ENCODE measurements at regions of chr6 and their contacts with region 1.

Region 1: DNA sequence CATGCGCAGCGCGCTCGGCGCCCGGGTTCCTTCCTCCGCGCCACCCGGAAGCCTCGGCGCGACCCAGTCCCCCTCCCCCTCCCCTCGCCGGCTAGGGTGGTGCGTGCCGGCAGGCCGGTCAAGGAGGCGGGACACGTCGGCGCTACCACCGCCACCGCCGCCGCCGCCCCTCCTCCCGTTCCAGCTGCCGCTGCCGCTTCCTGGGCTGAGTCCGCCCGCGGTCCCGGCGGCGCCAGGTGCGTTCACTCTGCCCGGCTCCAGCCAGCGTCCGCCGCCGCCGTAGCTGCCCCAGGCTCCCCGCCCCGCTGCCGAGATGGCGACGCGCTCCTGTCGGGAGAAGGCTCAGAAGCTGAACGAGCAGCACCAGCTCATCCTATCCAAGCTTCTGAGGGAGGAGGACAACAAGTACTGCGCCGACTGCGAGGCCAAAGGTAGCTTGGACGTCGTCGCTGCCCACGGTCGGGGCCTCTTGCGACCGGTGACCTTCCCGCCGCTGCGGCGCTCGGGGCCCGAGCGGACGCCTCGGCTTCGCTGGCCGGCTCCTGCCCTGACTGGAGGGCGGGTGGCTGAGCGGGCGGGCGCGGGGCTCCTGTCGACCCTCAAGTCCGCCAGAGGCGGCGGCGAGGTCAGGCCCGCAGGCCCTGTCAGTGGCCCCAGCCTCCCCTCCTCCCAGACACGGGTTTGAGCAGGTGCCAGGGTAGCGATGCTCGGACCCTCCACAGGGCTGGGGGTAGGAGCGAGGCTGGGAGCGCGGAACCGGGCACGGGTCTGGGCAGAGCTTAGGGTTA is at the start of gene SMAP1:
- DNase-seq: peak; percentile 95 to 97
- ATAC-seq: peak; percentile 98 to 99 (median 99)
- H3K4me3 ChIP-seq: peak within 1 kb of the TSS; percentile 77 to 96 (median 88)
- H3K27ac ChIP-seq: peak within 1 kb of the TSS; percentile 85 to 98 (median 96)
- H3K4me1 ChIP-seq: peaks cover 0 to 59% (median 41%) of the 10 kb centered on the region in 9 donors
- H3K27me3 ChIP-seq: no peaks in the 10 kb centered on the region
- CTCF ChIP-seq: no peak
- total RNA-seq, gene SMAP1: 28.7 to 36.3 (median 31.0) TPM

Region 2: DNA sequence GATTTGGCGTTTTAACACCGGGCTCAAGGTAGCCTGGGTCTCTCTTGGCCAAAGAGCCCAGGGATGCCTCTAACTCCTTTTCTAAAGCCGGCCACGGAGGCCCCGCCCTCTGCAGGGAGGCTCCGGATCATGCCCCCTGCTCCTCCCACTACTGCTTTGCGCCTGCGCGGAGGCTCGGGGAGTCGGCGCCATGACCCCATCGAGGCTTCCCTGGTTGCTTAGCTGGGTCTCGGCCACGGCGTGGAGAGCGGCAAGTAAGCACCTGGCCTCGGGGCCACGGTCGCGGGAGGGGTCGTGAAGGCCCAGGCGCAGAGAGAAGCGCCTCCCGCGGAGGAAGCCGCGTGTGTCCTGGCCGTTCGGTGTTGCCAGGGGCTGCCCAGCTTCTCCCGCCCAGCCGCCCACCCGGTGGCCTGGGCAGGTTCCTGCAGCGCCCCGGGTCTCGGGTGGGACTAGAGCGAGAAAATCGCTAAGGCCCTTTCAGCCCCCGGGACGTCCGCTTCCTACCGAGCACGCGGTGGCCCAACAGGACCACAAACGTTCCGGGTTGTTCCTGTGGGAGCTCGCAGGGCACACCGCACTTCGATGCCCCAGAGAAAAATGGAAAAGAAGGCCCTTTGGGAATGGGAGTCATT is 101.0 kb before region 1 on chr6 and contains the start of gene SDHAF4:
- intact Hi-C with region 1: loop called in 5 of 10 experiments (anchors 5 to 10 kb)
- DNase-seq: peak; percentile 94 to 96
- ATAC-seq: peak; percentile 99 to 100 (median 100)
- H3K4me3 ChIP-seq: peak within 1 kb of the TSS; percentile 71 to 93 (median 81)
- H3K27ac ChIP-seq: peak within 1 kb of the TSS; percentile 49 to 95 (median 90)
- H3K4me1 ChIP-seq: peaks cover 0 to 15% (median 5%) of the 10 kb centered on the region in 9 donors
- H3K27me3 ChIP-seq: no peaks in the 10 kb centered on the region
- CTCF ChIP-seq: peak in 1 of 9 donors; percentile 38
- total RNA-seq, gene SDHAF4: 10.9 to 21.3 (median 17.7) TPM

Region 3: DNA sequence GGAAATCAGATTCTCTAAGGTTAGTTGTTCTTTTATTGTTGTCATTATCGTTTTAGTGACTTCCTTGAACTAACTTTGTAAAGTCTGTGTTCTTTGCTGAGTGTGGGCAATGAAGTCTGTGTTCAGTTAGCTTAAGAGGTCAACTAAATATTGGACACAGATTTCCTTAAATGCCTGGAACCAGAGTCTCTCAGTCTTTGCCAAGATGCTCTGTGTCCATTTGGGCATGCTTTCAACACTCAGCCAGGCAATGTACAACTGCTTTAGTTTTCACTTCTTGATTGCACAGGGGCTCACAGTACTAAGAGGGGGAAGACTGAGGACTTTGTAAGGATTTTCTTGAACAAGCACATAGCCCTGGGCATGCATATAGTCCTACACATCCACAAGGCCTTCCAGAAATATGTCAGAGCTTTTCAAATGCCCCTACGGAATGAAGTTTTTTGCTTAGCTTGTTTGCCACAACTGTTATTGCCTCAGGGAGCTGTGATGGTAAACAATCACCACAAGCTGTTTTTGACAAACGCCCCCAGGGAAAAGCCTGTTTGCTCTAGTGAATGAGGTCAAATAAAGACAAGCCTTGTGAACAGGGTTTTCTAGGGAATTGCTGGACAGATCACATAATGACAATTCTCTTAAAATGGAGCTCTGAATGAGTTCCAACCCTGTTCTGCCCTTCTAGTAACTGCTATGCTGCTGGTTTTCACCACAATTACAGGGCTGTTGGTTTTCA is 206.4 kb after region 1 on chr6:
- intact Hi-C with region 1: no loop called
- DNase-seq: no peak
- ATAC-seq: no peak
- H3K4me3 ChIP-seq: no peak overlapping the region
- H3K27ac ChIP-seq: no peak overlapping the region
- H3K4me1 ChIP-seq: no peaks in the 10 kb centered on the region
- H3K27me3 ChIP-seq: no peaks in the 10 kb centered on the region
- CTCF ChIP-seq: no peak